PC-3 (cell line): ENCODE measurements at regions of chr14 and their contacts with region 1.

Region 1: DNA sequence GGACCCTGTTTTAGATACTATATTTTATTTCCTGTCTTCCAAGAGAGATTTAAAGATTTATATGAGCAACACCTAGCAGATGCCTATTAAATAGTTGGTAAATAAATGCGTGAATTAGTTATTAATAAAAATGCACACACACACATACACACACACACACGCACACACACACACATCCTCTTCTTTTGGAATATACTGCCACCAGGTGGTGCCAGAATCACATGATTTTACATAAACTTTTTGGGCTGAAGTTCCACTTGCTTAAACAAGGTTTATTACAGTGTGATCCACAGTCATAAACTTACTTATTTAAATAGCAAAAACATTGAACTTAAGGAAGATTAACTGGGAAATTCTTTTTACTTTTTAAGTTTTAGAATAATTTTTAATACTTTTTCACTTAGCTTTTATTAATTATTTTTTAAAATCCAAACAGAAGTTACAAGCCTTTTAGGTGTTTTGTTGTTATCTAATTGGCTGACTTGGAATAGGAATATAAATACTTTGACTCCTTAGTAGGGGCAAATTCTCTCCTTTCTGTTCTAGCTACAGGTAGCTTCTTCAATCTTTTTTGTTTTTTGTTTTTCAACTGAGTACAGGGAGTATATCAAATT is 17.5 kb downstream of the RAD51B start:
- DNase-seq: peak; percentile 86
- ATAC-seq: peak; percentile 82
- H3K4me3 ChIP-seq: no peak overlapping the region
- H3K27ac ChIP-seq: no peak overlapping the region
- H3K4me1 ChIP-seq: peaks cover 7% of the 10 kb centered on the region; the same call in 1 of the 2 replicates
- H3K27me3 ChIP-seq: no peaks in the 10 kb centered on the region
- CTCF ChIP-seq: peak; percentile 93

Region 2: GRCh38 chr14:68816262-68816942 is 979.3 kb after region 1 on chr14:
- CTCF ChIA-PET with region 1: interaction called, 3 read pairs
- POLR2A ChIA-PET with region 1: interaction called, 12 read pairs
- intact Hi-C with region 1: loop called (anchors 2 kb)
- DNase-seq: peak; percentile 92
- ATAC-seq: peak; percentile 90
- H3K4me3 ChIP-seq: peak overlapping the region; percentile 60
- H3K27ac ChIP-seq: peak overlapping the region; percentile 83
- H3K4me1 ChIP-seq: peaks cover 22% of the 10 kb centered on the region
- H3K27me3 ChIP-seq: no peaks in the 10 kb centered on the region
- CTCF ChIP-seq: peak; percentile 97

Region 3: GRCh38 chr14:68843471-68844209 is 1006.5 kb after region 1 on chr14:
- CTCF ChIA-PET with region 1: no interaction called
- POLR2A ChIA-PET with region 1: no interaction called
- intact Hi-C with region 1: loop called (anchors 1 kb)
- DNase-seq: peak; percentile 80
- ATAC-seq: peak; percentile 87
- H3K4me3 ChIP-seq: peak overlapping the region; percentile 48; the same call in 1 of the 2 replicates
- H3K27ac ChIP-seq: no peak overlapping the region
- H3K4me1 ChIP-seq: peaks cover 14% of the 10 kb centered on the region
- H3K27me3 ChIP-seq: no peaks in the 10 kb centered on the region
- CTCF ChIP-seq: peak; percentile 98